ENCODE measurements at regions of chr4 and their contacts with region 1.

Region 1: GRCh38 chr4:41644288-41644914 is 104.1 kb downstream of the PHOX2B start:
- DNase-seq: peak; percentile 65
- H3K4me3 Mint-ChIP-seq: peak overlapping the region; percentile 41
- H3K27ac Mint-ChIP-seq: peak overlapping the region; percentile 47
- H3K4me1 Mint-ChIP-seq: peaks cover 8% of the 10 kb centered on the region
- H3K27me3 Mint-ChIP-seq: no peaks in the 10 kb centered on the region
- CTCF ChIP-seq: peak; percentile 65

Region 2: GRCh38 chr4:41406113-41406516 is 238.3 kb before region 1 on chr4:
- CTCF ChIA-PET with region 1: no interaction called
- intact Hi-C with region 1: loop called (anchors 5 kb)
- DNase-seq: peak; percentile 8
- H3K4me3 Mint-ChIP-seq: no peak overlapping the region
- H3K27ac Mint-ChIP-seq: no peak overlapping the region
- H3K4me1 Mint-ChIP-seq: peaks cover 12% of the 10 kb centered on the region
- H3K27me3 Mint-ChIP-seq: no peaks in the 10 kb centered on the region
- CTCF ChIP-seq: no peak

Region 3: DNA sequence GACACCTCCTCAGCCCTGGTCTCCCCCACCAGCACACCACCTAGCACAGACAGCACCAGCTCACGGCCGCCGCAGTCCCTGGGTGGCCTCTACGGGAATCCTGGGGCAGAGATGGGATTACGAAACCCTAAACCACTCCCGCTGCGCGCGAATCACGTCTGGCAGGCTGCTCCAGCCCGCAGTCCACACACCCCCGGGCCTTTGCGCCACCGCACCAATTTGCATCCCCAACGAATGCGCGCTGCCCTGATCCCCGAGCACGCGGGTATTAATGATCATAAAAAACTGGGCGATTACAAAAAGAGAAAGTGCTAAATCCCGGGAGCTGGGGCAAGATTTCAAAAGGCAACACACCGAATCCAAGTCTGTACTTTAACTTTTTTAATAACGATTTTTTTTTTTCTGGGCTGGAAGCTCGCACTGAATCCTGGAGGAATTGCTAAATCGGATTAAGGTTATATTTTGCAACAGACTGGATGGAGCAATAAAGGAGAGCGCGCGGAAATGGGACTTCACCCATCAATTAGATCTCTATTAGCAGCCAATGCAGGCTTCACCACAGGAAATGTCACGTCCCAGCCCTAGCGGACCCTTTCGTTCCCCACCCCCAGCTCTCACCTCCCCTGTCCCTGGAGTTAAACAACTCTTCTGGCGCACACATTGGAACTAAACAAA is 221.0 kb after region 1 on chr4:
- CTCF ChIA-PET with region 1: no interaction called
- intact Hi-C with region 1: no loop called
- DNase-seq: no peak
- H3K4me3 Mint-ChIP-seq: no peak overlapping the region
- H3K27ac Mint-ChIP-seq: no peak overlapping the region
- H3K4me1 Mint-ChIP-seq: no peaks in the 10 kb centered on the region
- H3K27me3 Mint-ChIP-seq: no peaks in the 10 kb centered on the region
- CTCF ChIP-seq: no peak

Measured in Calu3 (cell line).